PC-3 (cell line): ENCODE measurements at regions of chr11 and their contacts with region 1.

Region 1: DNA sequence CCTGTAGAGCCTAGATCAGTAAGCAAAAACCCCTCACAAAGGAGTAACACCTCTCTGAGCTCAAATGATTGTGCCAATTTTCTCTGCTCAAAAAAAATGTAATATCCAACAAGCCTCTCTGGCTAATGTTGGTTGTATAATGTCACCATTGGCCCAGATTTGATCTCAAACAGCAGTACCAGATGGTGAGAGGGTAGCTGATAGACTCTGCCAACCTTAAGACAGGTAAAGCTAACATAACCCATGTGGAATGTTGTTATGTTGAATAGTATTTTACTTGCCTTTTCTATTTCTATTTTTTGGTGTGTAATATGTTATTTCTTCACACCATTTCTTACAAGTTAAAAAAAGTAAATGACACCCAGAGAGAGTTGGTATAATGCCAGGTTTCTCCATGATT is 166.7 kb upstream of the GUCY1A2 start:
- DNase-seq: no peak
- ATAC-seq: no peak
- H3K4me3 ChIP-seq: no peak overlapping the region
- H3K27ac ChIP-seq: no peak overlapping the region
- H3K4me1 ChIP-seq: no peaks in the 10 kb centered on the region
- H3K27me3 ChIP-seq: peaks cover 34% of the 10 kb centered on the region; the same call in 1 of the 2 replicates
- CTCF ChIP-seq: no peak

Region 2: DNA sequence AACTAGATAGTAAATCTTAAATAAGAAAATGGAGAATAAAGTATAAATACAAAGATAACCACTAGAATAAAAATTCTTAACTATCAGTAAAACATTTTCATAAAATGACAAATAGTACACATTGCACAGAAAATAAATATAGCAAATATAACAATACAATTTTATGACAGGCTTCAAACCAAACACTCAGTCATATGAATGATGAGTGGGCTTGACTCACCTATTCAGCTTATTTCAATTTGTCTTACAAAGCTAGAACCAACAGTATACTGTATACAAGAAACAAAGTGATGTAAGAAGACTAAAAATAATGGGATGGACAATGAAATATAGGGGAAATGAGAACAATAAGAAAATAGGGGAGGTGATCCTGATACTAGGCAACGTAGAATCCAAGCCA is 131.4 kb after region 1 on chr11:
- CTCF ChIA-PET with region 1: no interaction called
- POLR2A ChIA-PET with region 1: interaction called, 17 read pairs
- intact Hi-C with region 1: no loop called
- DNase-seq: peak; percentile 61
- ATAC-seq: peak; percentile 98
- H3K4me3 ChIP-seq: no peak overlapping the region
- H3K27ac ChIP-seq: peak overlapping the region; percentile 18; the same call in 1 of the 2 replicates
- H3K4me1 ChIP-seq: no peaks in the 10 kb centered on the region; the same call in 1 of the 2 replicates
- H3K27me3 ChIP-seq: no peaks in the 10 kb centered on the region
- CTCF ChIP-seq: no peak